ENCODE measurements at regions of chr3 and their contacts with region 1.

Region 1: GRCh38 chr3:137013955-137014688 is 56.3 kb downstream of the IL20RB start:
- DNase-seq: peak; percentile 86

Region 2: DNA sequence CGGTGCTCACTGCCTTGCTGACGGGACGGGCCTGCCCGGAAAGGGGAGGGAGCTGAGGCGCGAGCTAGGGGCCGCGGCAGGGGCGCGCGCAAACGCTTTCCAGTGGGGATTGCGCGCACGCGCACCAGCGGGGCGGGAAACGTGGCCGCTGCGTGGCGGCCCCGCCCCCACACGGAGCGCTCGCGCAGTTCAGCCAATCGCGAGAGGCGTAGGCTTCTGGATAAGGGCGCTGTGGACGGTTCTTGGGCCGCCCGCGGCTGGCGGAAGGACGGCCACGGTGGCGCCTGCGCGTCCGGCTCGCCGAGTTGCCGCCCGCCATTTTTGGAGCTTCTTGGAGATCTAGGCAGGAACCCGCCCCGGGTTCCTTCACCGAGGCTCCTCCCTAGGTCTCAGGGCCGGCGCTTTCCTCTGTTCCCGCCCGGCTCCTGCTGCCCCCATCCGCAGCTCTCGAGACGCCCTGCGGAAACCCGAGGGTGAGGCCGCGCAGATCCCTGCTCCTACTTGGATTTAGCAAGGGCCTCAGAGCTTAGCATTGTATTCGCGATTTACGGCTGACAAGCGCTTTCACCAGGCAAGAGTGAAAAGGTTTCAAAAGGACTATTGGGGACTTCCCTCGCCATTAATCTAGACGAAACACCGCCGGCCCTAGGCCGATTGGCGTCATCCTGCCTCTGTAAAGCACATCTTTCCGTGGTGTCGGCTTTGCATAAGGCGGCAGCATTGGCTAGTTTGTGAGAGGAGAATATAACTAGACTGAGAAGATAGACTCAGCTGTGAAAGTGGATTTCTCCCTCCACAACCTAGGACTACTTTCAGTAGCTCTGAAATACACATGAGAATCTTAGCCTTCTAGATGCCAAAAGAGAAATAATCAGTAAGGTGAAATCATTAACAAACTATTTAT is 261.4 kb before region 1 on chr3:
- in situ Hi-C with region 1: loop called (anchors 10 kb)
- DNase-seq: peak; percentile 95

Measured in ACHN (cell line).